ENCODE measurements at regions of chr3 and their contacts with region 1.

Region 1: DNA sequence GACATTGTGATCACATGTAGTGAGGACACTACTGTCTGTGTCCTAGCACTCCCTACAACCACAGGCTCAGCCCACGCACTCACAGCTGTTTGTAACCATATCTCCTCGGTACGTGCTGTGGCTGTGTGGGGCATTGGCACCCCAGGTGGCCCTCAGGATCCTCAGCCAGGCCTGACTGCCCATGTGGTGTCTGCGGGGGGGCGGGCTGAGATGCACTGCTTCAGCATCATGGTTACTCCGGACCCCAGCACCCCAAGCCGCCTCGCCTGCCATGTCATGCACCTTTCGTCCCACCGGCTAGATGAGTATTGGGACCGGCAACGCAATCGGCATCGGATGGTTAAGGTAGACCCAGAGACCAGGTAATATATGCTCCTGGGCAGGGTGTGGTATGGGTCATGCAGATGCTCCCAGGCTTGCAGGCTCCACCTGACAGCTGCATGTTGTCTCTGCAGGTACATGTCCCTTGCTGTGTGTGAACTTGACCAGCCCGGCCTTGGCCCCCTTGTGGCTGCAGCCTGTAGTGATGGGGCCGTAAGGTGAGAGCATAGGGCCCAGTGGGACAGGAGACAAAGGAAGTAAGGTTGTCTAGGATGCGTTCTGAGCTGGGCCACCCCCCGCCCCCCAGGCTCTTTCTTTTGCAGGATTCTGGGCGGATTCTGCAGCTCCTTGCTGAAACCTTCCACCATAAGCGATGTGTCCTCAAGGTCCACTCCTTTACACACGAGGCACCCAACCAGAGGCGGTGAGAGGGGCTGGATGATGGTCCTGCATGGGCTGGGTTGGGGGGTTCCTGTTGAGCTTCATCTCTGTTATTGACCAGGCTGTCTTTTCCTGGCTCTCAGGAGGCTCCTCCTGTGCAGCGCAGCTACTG is 4.4 kb downstream of the DALRD3 start:
- DNase-seq: peak in 8 of 9 experiments; percentile 26 to 64 (median 58)
- ATAC-seq: peak; percentile 49
- H3K4me3 ChIP-seq: no peak overlapping the region
- H3K4me3 Mint-ChIP-seq: no peak overlapping the region
- H3K27ac ChIP-seq: no peak overlapping the region
- H3K27ac Mint-ChIP-seq: no peak overlapping the region
- H3K4me1 ChIP-seq: peaks cover 13% of the 10 kb centered on the region
- H3K4me1 Mint-ChIP-seq: peaks cover 18% of the 10 kb centered on the region
- H3K27me3 ChIP-seq: no peaks in the 10 kb centered on the region
- H3K27me3 Mint-ChIP-seq: no peaks in the 10 kb centered on the region
- CTCF ChIP-seq: peak; percentile 26

Region 2: GRCh38 chr3:49001155-49001554 is 12.8 kb before region 1 on chr3:
- CTCF ChIA-PET with region 1: interaction called, 76 read pairs
- POLR2A ChIA-PET with region 1: interaction called, 122 read pairs
- intact Hi-C with region 1: no loop called
- DNase-seq: no peak
- ATAC-seq: no peak
- H3K4me3 ChIP-seq: no peak overlapping the region
- H3K4me3 Mint-ChIP-seq: no peak overlapping the region
- H3K27ac ChIP-seq: no peak overlapping the region
- H3K27ac Mint-ChIP-seq: no peak overlapping the region
- H3K4me1 ChIP-seq: peaks cover under 1% of the 10 kb centered on the region
- H3K4me1 Mint-ChIP-seq: peaks cover under 1% of the 10 kb centered on the region
- H3K27me3 ChIP-seq: no peaks in the 10 kb centered on the region
- H3K27me3 Mint-ChIP-seq: no peaks in the 10 kb centered on the region
- CTCF ChIP-seq: no peak

Measured in CD8-positive, alpha-beta T cell (primary cell).